ENCODE measurements at regions of chr10 and their contacts with region 1.

Region 1: DNA sequence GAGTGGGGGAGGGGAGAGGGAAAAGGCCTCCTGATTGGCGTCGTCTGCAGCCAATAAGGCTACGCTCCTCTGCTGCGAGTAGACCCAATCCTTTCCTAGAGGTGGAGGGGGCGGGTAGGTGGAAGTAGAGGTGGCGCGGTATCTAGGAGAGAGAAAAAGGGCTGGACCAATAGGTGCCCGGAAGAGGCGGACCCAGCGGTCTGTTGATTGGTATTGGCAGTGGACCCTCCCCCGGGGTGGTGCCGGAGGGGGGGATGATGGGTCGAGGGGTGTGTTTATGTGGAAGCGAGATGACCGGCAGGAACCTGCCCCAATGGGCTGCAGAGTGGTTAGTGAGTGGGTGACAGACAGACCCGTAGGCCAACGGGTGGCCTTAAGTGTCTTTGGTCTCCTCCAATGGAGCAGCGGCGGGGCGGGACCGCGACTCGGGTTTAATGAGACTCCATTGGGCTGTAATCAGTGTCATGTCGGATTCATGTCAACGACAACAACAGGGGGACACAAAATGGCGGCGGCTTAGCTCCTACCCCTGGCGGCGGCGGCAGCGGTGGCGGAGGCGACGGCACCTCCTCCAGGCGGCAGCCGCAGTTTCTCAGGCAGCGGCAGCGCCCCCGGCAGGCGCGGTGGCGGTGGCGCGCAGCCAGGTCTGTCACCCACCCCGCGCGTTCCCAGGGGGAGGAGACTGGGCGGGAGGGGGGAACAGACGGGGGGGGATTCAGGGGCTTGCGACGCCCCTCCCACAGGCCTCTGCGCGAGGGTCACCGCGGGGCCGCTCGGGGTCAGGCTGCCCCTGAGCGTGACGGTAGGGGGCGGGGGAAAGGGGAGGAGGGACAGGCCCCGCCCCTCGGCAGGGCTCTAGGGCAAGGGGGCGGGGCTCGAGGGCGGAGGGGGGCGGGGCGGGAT is at the start of gene KAT6B:
- DNase-seq: peak; percentile 98 to 100 (median 100)
- ATAC-seq: peak; percentile 78
- H3K4me3 ChIP-seq: peak within 1 kb of the TSS; percentile 85
- H3K4me3 Mint-ChIP-seq: peak within 1 kb of the TSS; percentile 94
- H3K27ac ChIP-seq: peak within 1 kb of the TSS; percentile 88 to 97
- H3K27ac Mint-ChIP-seq: peak within 1 kb of the TSS; percentile 90
- H3K4me1 ChIP-seq: peaks cover 40% of the 10 kb centered on the region
- H3K4me1 Mint-ChIP-seq: peaks cover 68% of the 10 kb centered on the region
- H3K27me3 ChIP-seq: no peaks in the 10 kb centered on the region
- H3K27me3 Mint-ChIP-seq: no peaks in the 10 kb centered on the region
- CTCF ChIP-seq: peak; percentile 32
- total RNA-seq, gene KAT6B: 70.3 to 74.2 TPM

Region 2: GRCh38 chr10:73879296-73880173 is 946.9 kb before region 1 on chr10:
- CTCF ChIA-PET with region 1: no interaction called
- POLR2A ChIA-PET with region 1: no interaction called
- intact Hi-C with region 1: loop called (anchors 10 kb)
- DNase-seq: peak; percentile 90 to 98 (median 94)
- ATAC-seq: peak; percentile 89
- H3K4me3 ChIP-seq: no peak overlapping the region
- H3K4me3 Mint-ChIP-seq: peak overlapping the region; percentile 15
- H3K27ac ChIP-seq: peak overlapping the region in 1 of 2 donors; percentile 33
- H3K27ac Mint-ChIP-seq: peak overlapping the region; percentile 72
- H3K4me1 ChIP-seq: peaks cover 37% of the 10 kb centered on the region
- H3K4me1 Mint-ChIP-seq: peaks cover 24% of the 10 kb centered on the region
- H3K27me3 ChIP-seq: no peaks in the 10 kb centered on the region
- H3K27me3 Mint-ChIP-seq: no peaks in the 10 kb centered on the region
- CTCF ChIP-seq: peak; percentile 92

Region 3: GRCh38 chr10:74314166-74314565 is 512.2 kb before region 1 on chr10:
- CTCF ChIA-PET with region 1: no interaction called
- POLR2A ChIA-PET with region 1: no interaction called
- intact Hi-C with region 1: no loop called
- DNase-seq: peak in 1 of 14 experiments; percentile 30
- ATAC-seq: no peak
- H3K4me3 ChIP-seq: no peak overlapping the region
- H3K4me3 Mint-ChIP-seq: no peak overlapping the region
- H3K27ac ChIP-seq: no peak overlapping the region
- H3K27ac Mint-ChIP-seq: no peak overlapping the region
- H3K4me1 ChIP-seq: no peaks in the 10 kb centered on the region
- H3K4me1 Mint-ChIP-seq: peaks cover 15% of the 10 kb centered on the region
- H3K27me3 ChIP-seq: no peaks in the 10 kb centered on the region
- H3K27me3 Mint-ChIP-seq: no peaks in the 10 kb centered on the region
- CTCF ChIP-seq: no peak

Region 4: DNA sequence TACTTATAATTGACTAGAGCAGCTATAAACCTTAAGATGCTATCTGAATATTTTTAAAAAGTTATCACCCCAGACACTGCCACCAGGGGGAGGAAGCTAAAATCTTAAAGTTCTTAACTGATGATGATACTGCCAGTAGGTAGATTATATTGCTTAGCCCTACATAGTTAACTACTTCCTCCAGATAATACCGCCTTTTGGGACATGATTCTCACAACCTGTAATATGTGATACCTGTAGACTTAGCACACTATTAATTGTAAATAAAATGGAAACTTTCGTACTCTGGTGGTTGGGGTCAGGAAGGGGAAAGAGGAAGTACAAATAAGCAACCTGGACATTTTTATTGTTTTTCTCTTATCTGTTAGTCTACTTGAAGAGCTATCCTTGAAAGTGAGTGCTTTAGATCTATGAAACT is 406.4 kb before region 1 on chr10:
- CTCF ChIA-PET with region 1: no interaction called
- POLR2A ChIA-PET with region 1: no interaction called
- intact Hi-C with region 1: loop called in 1 of 2 experiments (anchors 5 kb)
- DNase-seq: peak in 10 of 14 experiments; percentile 5 to 63 (median 25)
- ATAC-seq: peak; percentile 60
- H3K4me3 ChIP-seq: no peak overlapping the region
- H3K4me3 Mint-ChIP-seq: no peak overlapping the region
- H3K27ac ChIP-seq: no peak overlapping the region
- H3K27ac Mint-ChIP-seq: no peak overlapping the region
- H3K4me1 ChIP-seq: no peaks in the 10 kb centered on the region
- H3K4me1 Mint-ChIP-seq: peaks cover 7% of the 10 kb centered on the region
- H3K27me3 ChIP-seq: no peaks in the 10 kb centered on the region
- H3K27me3 Mint-ChIP-seq: no peaks in the 10 kb centered on the region
- CTCF ChIP-seq: peak; percentile 74

Region 5: DNA sequence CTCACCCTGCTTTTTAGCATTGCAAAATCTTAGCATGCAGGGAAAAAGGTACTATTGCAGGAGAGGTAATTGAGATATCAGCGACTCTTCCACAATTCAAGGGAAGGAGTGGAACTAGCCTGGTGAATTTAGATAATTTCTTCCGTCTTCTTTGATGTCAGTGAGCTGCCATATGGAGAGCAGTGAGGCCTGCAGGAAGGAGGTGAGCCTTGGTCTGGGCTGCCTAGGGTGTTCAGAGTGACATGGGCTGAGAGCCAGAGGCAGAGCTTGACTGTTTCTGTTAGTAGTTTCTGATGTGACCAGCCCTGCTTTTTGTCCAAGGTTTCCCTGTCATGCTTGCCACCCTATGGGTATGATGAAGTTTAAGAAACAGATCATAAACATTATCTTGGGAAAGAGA is 28.6 kb after region 1 on chr10:
- CTCF ChIA-PET with region 1: no interaction called
- POLR2A ChIA-PET with region 1: interaction called, 11 read pairs
- intact Hi-C with region 1: no loop called
- DNase-seq: no peak
- ATAC-seq: no peak
- H3K4me3 ChIP-seq: no peak overlapping the region
- H3K4me3 Mint-ChIP-seq: peak overlapping the region; percentile 13
- H3K27ac ChIP-seq: peak overlapping the region in 1 of 2 donors; percentile 10
- H3K27ac Mint-ChIP-seq: peak overlapping the region; percentile 81
- H3K4me1 ChIP-seq: peaks cover 12% of the 10 kb centered on the region
- H3K4me1 Mint-ChIP-seq: peaks cover 62% of the 10 kb centered on the region
- H3K27me3 ChIP-seq: no peaks in the 10 kb centered on the region
- H3K27me3 Mint-ChIP-seq: no peaks in the 10 kb centered on the region
- CTCF ChIP-seq: no peak

Region 6: DNA sequence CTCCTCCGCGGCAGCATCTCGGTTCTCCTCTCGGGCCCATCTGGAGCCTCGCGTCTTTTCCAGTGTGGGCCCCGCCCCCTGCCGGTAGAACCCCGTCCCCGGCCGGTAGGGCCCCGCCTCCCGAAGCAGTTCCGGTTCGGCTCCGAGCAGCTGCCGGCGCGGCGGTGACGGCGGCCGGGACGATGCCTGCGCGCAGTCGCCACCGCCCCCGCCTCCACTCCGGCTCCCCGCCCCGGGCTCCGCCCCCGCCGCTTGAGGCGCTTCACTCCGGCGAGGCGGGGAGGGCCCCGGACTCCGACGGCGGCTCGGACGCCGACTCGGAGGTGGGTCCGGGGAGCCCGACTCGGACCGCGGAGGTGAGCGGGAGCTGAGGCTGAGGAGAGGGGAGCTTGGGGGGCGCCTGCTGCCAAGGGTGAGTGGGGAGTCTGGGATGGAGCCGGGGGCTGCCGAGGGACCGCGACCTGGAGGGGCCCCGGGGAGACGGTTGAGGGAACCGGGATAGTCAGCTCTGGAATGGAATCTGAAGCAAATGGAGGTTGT is 285.0 kb after region 1 on chr10 and contains the start of gene SAMD8:
- CTCF ChIA-PET with region 1: no interaction called
- POLR2A ChIA-PET with region 1: interaction called, 9 read pairs
- intact Hi-C with region 1: loop called in 1 of 2 experiments (anchors 2 kb)
- DNase-seq: peak; percentile 90 to 99 (median 94)
- ATAC-seq: peak; percentile 80
- H3K4me3 ChIP-seq: peak within 1 kb of the TSS; percentile 97
- H3K4me3 Mint-ChIP-seq: peak within 1 kb of the TSS; percentile 88
- H3K27ac ChIP-seq: peak within 1 kb of the TSS; percentile 92 to 95
- H3K27ac Mint-ChIP-seq: peak within 1 kb of the TSS; percentile 90
- H3K4me1 ChIP-seq: peaks cover 26% of the 10 kb centered on the region
- H3K4me1 Mint-ChIP-seq: peaks cover 62% of the 10 kb centered on the region
- H3K27me3 ChIP-seq: no peaks in the 10 kb centered on the region
- H3K27me3 Mint-ChIP-seq: no peaks in the 10 kb centered on the region
- CTCF ChIP-seq: no peak
- total RNA-seq, gene SAMD8: 34.1 to 37.4 TPM